ENCODE measurements at regions of chr22 and their contacts with region 1.

Region 1: GRCh38 chr22:42343551-42344081 is 73.2 kb upstream of the TCF20 start:
- DNase-seq: no peak
- H3K4me3 ChIP-seq: peak overlapping the region in 49 of 59 donors; percentile 25 to 75 (median 66)
- H3K27ac ChIP-seq: peak overlapping the region in 53 of 59 donors; percentile 58 to 100 (median 97)
- H3K27me3 ChIP-seq: no peaks in the 10 kb centered on the region
- CTCF ChIP-seq: no peak

Region 2: GRCh38 chr22:42270512-42271417 is 72.9 kb before region 1 on chr22 and contains the start of gene TCF20:
- intact Hi-C with region 1: loop called in 1 of 2 experiments (anchors 5 kb)
- DNase-seq: peak in 9 of 10 donors; percentile 60 to 82 (median 72)
- H3K4me3 ChIP-seq: peak within 1 kb of the TSS; percentile 66 to 99 (median 95)
- H3K27ac ChIP-seq: peak within 1 kb of the TSS in 53 of 59 donors; percentile 29 to 92 (median 71)
- H3K27me3 ChIP-seq: no peaks in the 10 kb centered on the region
- CTCF ChIP-seq: no peak
- total RNA-seq, gene TCF20: 46.9 to 80.5 (median 64.3) TPM

Region 3: GRCh38 chr22:42294034-42294985 is 49.3 kb before region 1 on chr22:
- intact Hi-C with region 1: no loop called
- DNase-seq: no peak
- H3K4me3 ChIP-seq: no peak overlapping the region
- H3K27ac ChIP-seq: peak overlapping the region in 2 of 59 donors; percentile 1 to 22
- H3K27me3 ChIP-seq: no peaks in the 10 kb centered on the region
- CTCF ChIP-seq: peak in 1 of 56 donors; percentile 12

Region 4: GRCh38 chr22:42363892-42364291 is 20.3 kb after region 1 on chr22:
- intact Hi-C with region 1: loop called in 1 of 2 experiments (anchors 2 kb)
- DNase-seq: no peak
- H3K4me3 ChIP-seq: no peak overlapping the region
- H3K27ac ChIP-seq: peak overlapping the region in 19 of 59 donors; percentile 16 to 85 (median 64)
- H3K27me3 ChIP-seq: peaks cover 0 to 4% (median 0%) of the 10 kb centered on the region in 45 donors
- CTCF ChIP-seq: no peak

Region 5: GRCh38 chr22:42396621-42397331 is 53.2 kb after region 1 on chr22:
- intact Hi-C with region 1: no loop called
- DNase-seq: peak in 1 of 10 donors; percentile 28
- H3K4me3 ChIP-seq: peak overlapping the region in 1 of 59 donors; percentile 17
- H3K27ac ChIP-seq: peak overlapping the region in 11 of 59 donors; percentile 10 to 57 (median 37)
- H3K27me3 ChIP-seq: no peaks in the 10 kb centered on the region
- CTCF ChIP-seq: peak in 3 of 56 donors; percentile 7 to 14 (median 11)

Region 6: DNA sequence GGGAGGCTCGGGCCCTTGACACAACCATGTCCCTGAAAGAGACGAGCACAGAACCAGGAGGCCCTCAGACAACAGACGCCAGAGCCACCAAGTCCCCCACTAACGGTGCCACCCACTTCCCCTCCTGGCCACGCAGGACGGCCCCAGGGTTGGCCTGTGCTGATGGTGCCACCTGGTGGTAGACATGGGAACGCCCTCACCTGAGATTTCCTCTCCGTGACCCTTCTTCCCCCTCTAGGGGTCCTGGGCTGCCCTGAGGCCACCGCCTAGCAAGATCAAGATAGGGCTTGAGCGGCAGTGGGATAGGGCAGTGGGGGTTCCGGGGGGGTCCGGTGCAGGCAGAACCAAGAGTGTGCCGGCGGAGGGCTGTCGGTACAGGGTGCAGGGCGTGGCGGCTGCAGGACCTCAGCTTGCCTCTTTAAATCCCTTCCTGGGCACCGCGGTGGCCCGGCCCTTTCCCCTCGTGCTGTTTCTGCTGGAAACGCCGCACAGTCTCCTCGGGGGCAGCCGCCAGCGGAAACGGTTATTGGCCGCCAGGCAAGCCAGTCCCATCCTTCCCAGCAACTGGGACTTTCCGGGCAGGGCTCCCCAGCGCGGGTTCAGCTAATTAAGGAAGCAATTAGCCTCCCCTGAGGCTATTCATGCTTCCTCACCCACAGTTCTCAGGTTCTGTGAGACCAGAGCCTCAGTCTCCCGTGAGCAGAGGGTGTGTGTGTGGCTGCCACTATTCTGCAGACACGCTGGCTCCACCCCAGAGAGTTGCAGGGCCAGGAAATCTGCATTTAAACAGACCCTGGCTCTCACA is 94.1 kb after region 1 on chr22:
- intact Hi-C with region 1: no loop called
- DNase-seq: peak; percentile 60 to 83 (median 70)
- H3K4me3 ChIP-seq: peak overlapping the region; percentile 9 to 71 (median 56)
- H3K27ac ChIP-seq: peak overlapping the region in 7 of 59 donors; percentile 7 to 81 (median 53)
- H3K27me3 ChIP-seq: no peaks in the 10 kb centered on the region
- CTCF ChIP-seq: peak; percentile 94 to 99 (median 98)

Region 7: GRCh38 chr22:42493393-42493792 is 149.8 kb after region 1 on chr22:
- intact Hi-C with region 1: no loop called
- DNase-seq: no peak
- H3K4me3 ChIP-seq: no peak overlapping the region
- H3K27ac ChIP-seq: no peak overlapping the region
- H3K27me3 ChIP-seq: no peaks in the 10 kb centered on the region
- CTCF ChIP-seq: no peak

Measured in dorsolateral prefrontal cortex (tissue), 120 donors.